Mammary epithelial cell (primary cell): ENCODE measurements at regions of chr20 and their contacts with region 1.

Region 1: GRCh38 chr20:20083807-20084206 is 31.5 kb downstream of the CFAP61 start:
- DNase-seq: peak; percentile 23
- H3K4me3 ChIP-seq: peak overlapping the region in 1 of 3 experiments; percentile 17
- H3K27ac ChIP-seq: no peak overlapping the region
- H3K4me1 ChIP-seq: peaks cover 15% of the 10 kb centered on the region
- H3K27me3 ChIP-seq: peaks cover 1% of the 10 kb centered on the region
- CTCF ChIP-seq: peak; percentile 40 to 44

Region 2: GRCh38 chr20:20130399-20130798 is 46.6 kb after region 1 on chr20:
- CTCF ChIA-PET with region 1: no interaction called
- dilution Hi-C with region 1: no loop called
- in situ Hi-C with region 1: no loop called
- intact Hi-C with region 1: loop called (anchors 2 kb)
- DNase-seq: peak; percentile 42
- H3K4me3 ChIP-seq: no peak overlapping the region
- H3K27ac ChIP-seq: no peak overlapping the region
- H3K4me1 ChIP-seq: no peaks in the 10 kb centered on the region
- H3K27me3 ChIP-seq: no peaks in the 10 kb centered on the region
- CTCF ChIP-seq: peak; percentile 58 to 77

Region 3: GRCh38 chr20:20237093-20237959 is 153.5 kb after region 1 on chr20:
- CTCF ChIA-PET with region 1: interaction called, 3 read pairs
- dilution Hi-C with region 1: no loop called
- in situ Hi-C with region 1: loop called (anchors 5 to 10 kb)
- intact Hi-C with region 1: loop called (anchors 1 kb)
- DNase-seq: peak; percentile 29
- H3K4me3 ChIP-seq: no peak overlapping the region
- H3K27ac ChIP-seq: no peak overlapping the region
- H3K4me1 ChIP-seq: no peaks in the 10 kb centered on the region
- H3K27me3 ChIP-seq: peaks cover 3% of the 10 kb centered on the region
- CTCF ChIP-seq: peak; percentile 73 to 83

Region 4: GRCh38 chr20:20360464-20360863 is 276.7 kb after region 1 on chr20:
- CTCF ChIA-PET with region 1: no interaction called
- dilution Hi-C with region 1: no loop called
- in situ Hi-C with region 1: loop called in 1 of 2 experiments (anchors 25 kb)
- intact Hi-C with region 1: loop called (anchors 2 kb)
- DNase-seq: peak; percentile 60
- H3K4me3 ChIP-seq: no peak overlapping the region
- H3K27ac ChIP-seq: no peak overlapping the region
- H3K4me1 ChIP-seq: no peaks in the 10 kb centered on the region
- H3K27me3 ChIP-seq: peaks cover 37% of the 10 kb centered on the region
- CTCF ChIP-seq: peak; percentile 76 to 87